ENCODE measurements at regions of chr5 and their contacts with region 1.

Region 1: GRCh38 chr5:141564216-141564692 is 54.5 kb downstream of the DIAPH1 start:
- DNase-seq: peak; percentile 98
- H3K4me3 Mint-ChIP-seq: no peak overlapping the region
- H3K27ac Mint-ChIP-seq: peak overlapping the region; percentile 98
- H3K4me1 Mint-ChIP-seq: peaks cover 39% of the 10 kb centered on the region
- H3K27me3 Mint-ChIP-seq: no peaks in the 10 kb centered on the region
- CTCF ChIP-seq: peak; percentile 92

Region 2: DNA sequence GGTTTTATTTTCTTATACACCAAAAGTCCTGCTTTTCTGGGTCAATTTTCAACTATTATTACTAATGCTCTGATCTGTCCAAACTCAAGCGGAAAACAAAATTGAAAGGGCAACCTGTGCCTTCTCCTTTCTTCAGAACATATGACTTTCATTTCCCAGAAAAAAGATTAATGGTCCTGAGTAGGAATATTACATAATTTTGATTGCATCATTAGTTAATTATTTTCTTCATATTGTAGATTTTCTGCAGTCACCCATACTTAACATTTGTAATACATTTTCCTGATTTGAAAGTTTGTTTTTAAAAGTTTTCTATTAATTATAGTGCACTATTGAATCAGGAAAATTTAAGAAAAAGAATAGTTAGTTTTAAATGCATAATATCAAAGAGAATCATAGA is 388.3 kb before region 1 on chr5:
- CTCF ChIA-PET with region 1: no interaction called
- POLR2A ChIA-PET with region 1: no interaction called
- intact Hi-C with region 1: no loop called
- DNase-seq: no peak
- H3K4me3 Mint-ChIP-seq: no peak overlapping the region
- H3K27ac Mint-ChIP-seq: no peak overlapping the region
- H3K4me1 Mint-ChIP-seq: no peaks in the 10 kb centered on the region
- H3K27me3 Mint-ChIP-seq: no peaks in the 10 kb centered on the region
- CTCF ChIP-seq: no peak

Region 3: DNA sequence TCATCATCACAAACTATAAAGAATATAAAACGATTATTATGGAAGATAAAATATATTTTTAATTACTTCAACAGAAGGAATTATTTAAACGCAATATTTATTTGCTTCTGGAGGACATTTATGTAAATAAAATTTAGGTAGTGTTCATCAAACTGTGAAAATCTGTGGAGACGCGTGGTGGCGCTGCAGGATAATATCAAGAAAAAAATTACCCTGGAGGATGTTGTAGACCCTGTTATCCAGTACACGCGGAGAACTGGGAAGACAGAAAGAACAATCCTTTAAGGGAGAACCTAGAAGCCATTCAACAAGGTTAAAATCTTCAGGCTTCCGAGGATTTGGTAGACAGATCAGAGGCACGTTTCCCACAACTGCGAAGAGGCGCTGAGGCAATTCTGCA is 355.8 kb before region 1 on chr5 and contains the start of gene PCDHB12:
- CTCF ChIA-PET with region 1: interaction called, 18 read pairs
- POLR2A ChIA-PET with region 1: interaction called, 6 read pairs
- intact Hi-C with region 1: loop called (anchors 1 kb)
- DNase-seq: peak; percentile 60
- H3K4me3 Mint-ChIP-seq: peak within 1 kb of the TSS; percentile 72
- H3K27ac Mint-ChIP-seq: no peak within 1 kb of the TSS
- H3K4me1 Mint-ChIP-seq: no peaks in the 10 kb centered on the region
- H3K27me3 Mint-ChIP-seq: no peaks in the 10 kb centered on the region
- CTCF ChIP-seq: peak; percentile 38
- total RNA-seq, gene PCDHB12: 1.6 and 2.3 TPM in 2 replicates

Region 4: GRCh38 chr5:141369994-141370848 is 194.0 kb before region 1 on chr5 and contains the start of gene PCDHGB3:
- CTCF ChIA-PET with region 1: interaction called, 13 read pairs
- POLR2A ChIA-PET with region 1: no interaction called
- intact Hi-C with region 1: loop called (anchors 2 kb)
- DNase-seq: peak; percentile 33
- H3K4me3 Mint-ChIP-seq: peak within 1 kb of the TSS; percentile 60
- H3K27ac Mint-ChIP-seq: no peak within 1 kb of the TSS
- H3K4me1 Mint-ChIP-seq: no peaks in the 10 kb centered on the region
- H3K27me3 Mint-ChIP-seq: no peaks in the 10 kb centered on the region
- CTCF ChIP-seq: peak; percentile 24
- total RNA-seq, gene PCDHGB3: 0.33 and 0.56 TPM in 2 replicates

Region 5: GRCh38 chr5:141412854-141413539 is 151.3 kb before region 1 on chr5 and contains the start of gene PCDHGA10:
- CTCF ChIA-PET with region 1: interaction called, 38 read pairs
- POLR2A ChIA-PET with region 1: interaction called, 6 read pairs
- intact Hi-C with region 1: loop called (anchors 1 kb)
- DNase-seq: peak; percentile 83
- H3K4me3 Mint-ChIP-seq: peak within 1 kb of the TSS; percentile 54
- H3K27ac Mint-ChIP-seq: no peak within 1 kb of the TSS
- H3K4me1 Mint-ChIP-seq: no peaks in the 10 kb centered on the region
- H3K27me3 Mint-ChIP-seq: no peaks in the 10 kb centered on the region
- CTCF ChIP-seq: peak; percentile 67
- total RNA-seq, gene PCDHGA10: 1.4 TPM in 2 replicates

Region 6: DNA sequence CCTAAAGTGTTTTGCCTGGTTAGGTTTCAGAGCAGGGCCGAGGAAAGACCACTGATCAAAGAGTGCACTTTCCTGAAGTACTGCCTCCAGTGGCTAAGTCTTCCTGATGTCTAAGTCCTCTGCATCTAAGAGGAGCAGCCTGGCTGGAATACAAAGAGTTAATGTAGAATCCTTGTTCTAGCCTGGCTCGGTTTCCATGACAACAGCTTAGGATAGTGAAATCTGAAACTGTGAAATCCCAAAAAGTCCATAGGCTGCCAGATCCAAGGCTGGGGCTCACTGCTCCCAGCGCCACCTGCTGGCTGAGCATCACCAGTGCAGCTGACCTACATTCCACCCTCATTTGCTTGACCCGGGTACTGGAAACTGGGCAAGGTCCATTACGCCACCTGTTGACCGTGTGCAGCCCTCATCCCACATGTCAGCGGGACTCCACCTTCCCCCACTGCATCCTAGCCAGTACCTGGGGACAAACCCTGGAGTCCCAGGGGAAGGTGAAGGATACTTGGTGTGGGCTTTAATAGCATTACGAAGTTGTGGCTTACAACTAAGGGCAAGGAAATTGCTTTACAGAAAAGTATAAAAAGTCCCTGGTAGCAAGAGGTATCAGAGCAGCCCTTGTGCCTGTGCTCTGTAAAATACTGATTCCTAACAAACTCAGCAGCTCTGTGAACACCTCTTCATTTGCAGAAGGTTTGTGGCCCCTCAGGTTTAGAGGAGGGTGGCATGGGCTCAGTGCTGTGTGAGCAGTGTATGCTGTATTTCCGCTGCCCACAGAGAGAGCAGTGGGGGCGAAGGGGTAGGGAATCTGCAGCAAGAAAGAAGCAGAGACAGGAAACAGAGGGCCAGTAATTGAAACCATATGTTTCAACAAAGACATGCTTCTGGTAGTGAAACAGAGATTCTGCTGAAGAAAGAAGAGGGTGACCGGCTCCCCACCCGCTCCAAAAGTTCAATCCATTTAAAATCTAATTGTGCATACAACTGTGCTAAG is 39.4 kb before region 1 on chr5:
- CTCF ChIA-PET with region 1: interaction called, 191 read pairs
- POLR2A ChIA-PET with region 1: interaction called, 167 read pairs
- intact Hi-C with region 1: no loop called
- DNase-seq: peak; percentile 97
- H3K4me3 Mint-ChIP-seq: no peak overlapping the region
- H3K27ac Mint-ChIP-seq: peak overlapping the region; percentile 60
- H3K4me1 Mint-ChIP-seq: peaks cover 45% of the 10 kb centered on the region
- H3K27me3 Mint-ChIP-seq: no peaks in the 10 kb centered on the region
- CTCF ChIP-seq: peak; percentile 100

Region 7: DNA sequence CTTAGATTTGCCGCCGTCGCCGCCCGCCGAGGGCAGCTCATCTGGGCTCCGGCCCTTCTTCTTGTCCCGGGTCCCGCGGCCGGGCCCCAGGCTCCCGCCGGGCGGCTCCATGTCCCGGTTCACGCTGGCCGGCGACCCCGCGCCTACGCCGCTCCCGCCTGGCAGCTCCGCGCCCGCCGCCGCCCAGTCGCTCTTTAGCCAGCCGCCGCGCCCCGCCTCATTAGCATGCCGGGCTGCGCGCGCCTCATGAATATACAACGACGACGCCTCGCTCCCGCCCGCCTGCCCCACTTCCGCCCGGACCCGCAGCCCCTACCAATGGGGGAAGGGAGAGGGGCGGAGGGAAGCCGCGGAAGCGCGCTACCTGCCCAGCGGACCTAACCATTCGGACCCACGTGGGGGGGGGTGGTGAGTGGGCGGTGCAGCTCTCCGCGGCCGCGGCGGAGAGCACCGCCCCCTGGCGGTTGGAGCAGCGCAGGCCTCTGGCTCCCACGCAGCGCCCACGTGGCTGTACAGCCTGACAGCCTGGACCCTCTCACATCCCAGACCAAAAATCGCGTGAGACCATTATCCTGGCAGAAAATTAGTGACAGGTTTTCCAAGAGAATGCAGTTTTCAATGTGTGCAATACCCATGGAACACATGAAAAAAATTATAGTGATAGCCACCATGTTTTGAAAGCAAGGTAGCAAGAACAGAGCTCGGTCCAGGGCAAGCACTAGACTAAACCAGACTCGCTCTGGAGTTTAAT is 54.7 kb after region 1 on chr5 and contains the start of gene DIAPH1:
- CTCF ChIA-PET with region 1: interaction called, 28 read pairs
- POLR2A ChIA-PET with region 1: interaction called, 14 read pairs
- intact Hi-C with region 1: no loop called
- DNase-seq: peak; percentile 99
- H3K4me3 Mint-ChIP-seq: peak within 1 kb of the TSS; percentile 96
- H3K27ac Mint-ChIP-seq: peak within 1 kb of the TSS; percentile 99
- H3K4me1 Mint-ChIP-seq: peaks cover 21% of the 10 kb centered on the region
- H3K27me3 Mint-ChIP-seq: no peaks in the 10 kb centered on the region
- CTCF ChIP-seq: peak; percentile 99
- total RNA-seq, gene DIAPH1: 203 and 228 TPM in 2 replicates

Region 8: DNA sequence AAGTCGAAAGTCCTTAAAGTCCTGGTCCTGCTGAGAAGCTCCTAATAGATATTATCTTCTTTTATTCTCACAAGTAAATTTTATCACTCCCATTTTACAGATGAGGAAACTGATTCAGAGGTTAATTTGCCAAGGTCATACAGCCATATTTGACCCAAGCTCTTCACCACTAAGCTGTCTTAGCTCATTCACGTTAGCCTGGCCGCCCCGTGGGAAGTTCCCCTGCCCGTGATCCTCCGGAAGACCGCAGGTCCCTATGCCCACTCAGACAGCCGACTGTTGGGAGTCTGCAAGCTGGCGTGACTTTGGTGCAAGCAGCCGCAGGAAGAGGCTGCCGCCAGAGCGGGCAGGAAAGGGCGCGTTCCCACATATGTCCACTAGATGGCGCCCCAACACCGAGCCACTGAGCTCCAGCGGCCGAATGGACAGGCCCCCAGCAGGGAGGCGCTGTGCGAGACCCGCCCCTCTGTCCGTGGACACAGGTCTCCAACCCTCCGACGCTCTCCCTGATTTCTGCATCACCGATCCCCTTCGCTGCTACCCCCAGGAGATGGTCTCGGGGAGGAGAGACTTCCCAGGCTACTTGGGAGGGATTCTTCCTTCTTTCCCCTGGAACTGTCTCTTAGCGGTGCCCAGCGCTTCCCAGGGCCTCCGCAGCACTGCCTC is 127.7 kb after region 1 on chr5:
- CTCF ChIA-PET with region 1: no interaction called
- POLR2A ChIA-PET with region 1: no interaction called
- intact Hi-C with region 1: no loop called
- DNase-seq: peak; percentile 87
- H3K4me3 Mint-ChIP-seq: peak overlapping the region; percentile 62
- H3K27ac Mint-ChIP-seq: peak overlapping the region; percentile 43
- H3K4me1 Mint-ChIP-seq: peaks cover 8% of the 10 kb centered on the region
- H3K27me3 Mint-ChIP-seq: peaks cover 35% of the 10 kb centered on the region
- CTCF ChIP-seq: peak; percentile 99